Activated T-helper 1 cell treated with anti-CD3 and anti-CD28 coated beads, Interleukin-12 subunit alpha, Interleukin-12 subunit beta, Interleukin-2, Interleukin-4 antibody, amounts not matched to agents 30 ng/mL and 10 ng/mL and 1 ng/mL, durations not matched to agents 14 hours and 24 hours and 36 hours (primary cell): ENCODE measurements at regions of chr3 and their contacts with region 1.

Region 1: DNA sequence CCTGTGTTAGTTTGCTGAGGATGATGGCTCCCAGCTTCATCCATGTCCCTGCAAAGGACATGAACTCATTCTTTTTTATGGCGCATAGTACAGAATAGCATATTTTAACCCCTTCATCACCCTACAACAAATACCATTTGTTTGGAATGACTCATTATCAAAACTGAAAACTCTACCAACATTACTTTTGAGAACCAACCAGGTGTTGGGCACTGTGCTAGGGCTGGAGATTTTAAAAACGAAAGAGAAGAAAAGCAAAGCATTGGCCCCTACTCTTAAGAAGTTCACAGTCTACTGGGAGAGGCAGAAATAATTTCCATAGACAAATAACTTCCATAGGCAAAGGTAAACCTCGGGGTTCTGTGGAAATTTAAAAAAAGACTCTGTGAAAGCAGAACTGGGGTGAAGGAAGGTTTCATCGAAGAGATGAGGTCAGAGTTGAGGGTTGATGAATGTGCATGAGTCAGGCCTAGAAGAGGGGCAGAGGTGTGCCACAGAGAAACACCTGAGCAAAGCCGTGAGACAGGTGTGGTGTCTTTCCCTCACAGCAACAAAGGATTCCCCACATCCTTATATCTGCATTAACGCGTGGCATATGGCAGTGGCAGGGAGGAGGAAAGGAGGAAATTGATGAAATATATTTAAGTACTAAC is 51.0 kb downstream of the MCF2L2 start:
- DNase-seq: no peak
- H3K4me3 Mint-ChIP-seq: no peak overlapping the region
- H3K27ac Mint-ChIP-seq: no peak overlapping the region
- H3K4me1 Mint-ChIP-seq: peaks cover 36% of the 10 kb centered on the region
- H3K27me3 Mint-ChIP-seq: no peaks in the 10 kb centered on the region

Region 2: DNA sequence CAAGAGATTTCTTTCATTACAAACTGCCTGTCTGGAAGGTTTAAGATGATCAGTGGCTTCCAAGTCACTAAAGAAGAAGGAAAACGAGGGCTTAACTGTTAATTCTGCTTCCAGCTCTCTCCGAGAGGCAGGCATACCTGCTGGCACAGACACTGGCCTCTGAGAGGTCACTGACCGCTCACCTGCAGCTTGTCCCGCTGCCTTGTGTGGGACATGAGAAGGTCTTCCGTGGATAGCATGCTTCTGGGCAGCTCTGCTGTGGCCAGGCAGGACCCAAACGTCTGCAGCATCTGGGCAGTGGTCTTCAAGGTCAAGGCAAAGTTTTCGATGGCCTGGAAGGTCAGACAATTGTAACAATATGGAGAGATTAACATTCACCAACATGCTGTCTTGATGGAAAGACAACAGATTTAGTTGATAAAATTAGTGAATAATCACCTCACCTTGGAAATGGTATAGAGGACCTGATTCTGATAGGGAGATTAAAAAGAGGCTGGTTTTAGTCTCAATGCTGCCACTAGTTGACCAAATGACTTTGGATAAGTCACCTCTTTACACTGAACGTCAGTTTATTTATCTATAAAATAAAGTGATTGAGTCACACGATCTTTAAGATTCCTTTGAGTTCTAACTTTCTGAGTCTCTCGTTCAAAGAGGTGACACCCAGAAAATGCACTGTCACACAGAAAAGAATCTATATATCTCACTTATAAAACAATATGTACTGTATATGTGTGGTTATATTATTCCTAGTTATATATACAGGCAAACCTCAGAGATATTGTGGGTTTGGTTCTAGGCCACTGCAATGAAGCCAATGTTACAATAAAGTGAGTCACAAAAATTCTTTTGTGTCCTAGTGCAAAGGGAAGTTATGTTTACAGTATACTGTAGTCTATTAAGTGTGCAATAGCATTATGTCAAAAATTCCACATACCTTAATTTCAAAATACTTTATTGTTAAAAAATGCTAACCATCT is 59.3 kb before region 1 on chr3:
- intact Hi-C with region 1: loop called (anchors 2 kb)
- DNase-seq: no peak
- H3K4me3 Mint-ChIP-seq: no peak overlapping the region
- H3K27ac Mint-ChIP-seq: no peak overlapping the region
- H3K4me1 Mint-ChIP-seq: peaks cover 17% of the 10 kb centered on the region
- H3K27me3 Mint-ChIP-seq: no peaks in the 10 kb centered on the region

Region 3: DNA sequence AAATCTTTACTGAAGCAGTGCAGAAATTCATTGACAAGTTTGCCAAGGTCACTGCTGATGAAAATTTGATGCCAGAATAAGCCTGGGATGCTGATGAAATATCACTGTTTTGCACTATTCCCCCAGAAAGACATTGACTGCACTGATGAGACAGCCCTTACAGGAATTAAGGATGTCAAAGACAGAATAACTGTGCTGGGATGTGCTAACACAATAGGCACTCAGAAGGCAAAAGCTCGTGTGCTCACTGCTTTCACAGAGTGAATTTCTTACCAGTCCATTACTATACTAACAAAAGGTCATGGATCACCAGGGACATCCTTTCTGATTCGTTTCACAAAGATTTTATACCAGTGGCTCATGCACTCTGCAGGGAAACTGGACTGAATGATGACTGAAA is 18.4 kb before region 1 on chr3:
- intact Hi-C with region 1: no loop called
- DNase-seq: no peak
- H3K4me3 Mint-ChIP-seq: no peak overlapping the region
- H3K27ac Mint-ChIP-seq: no peak overlapping the region
- H3K4me1 Mint-ChIP-seq: peaks cover 11% of the 10 kb centered on the region
- H3K27me3 Mint-ChIP-seq: no peaks in the 10 kb centered on the region

Region 4: GRCh38 chr3:183895296-183895695 is 517.9 kb after region 1 on chr3:
- intact Hi-C with region 1: no loop called
- DNase-seq: no peak
- H3K4me3 Mint-ChIP-seq: no peak overlapping the region
- H3K27ac Mint-ChIP-seq: no peak overlapping the region
- H3K4me1 Mint-ChIP-seq: peaks cover 6% of the 10 kb centered on the region
- H3K27me3 Mint-ChIP-seq: peaks cover 8% of the 10 kb centered on the region